ENCODE measurements at regions of chr21 and their contacts with region 1.

Region 1: DNA sequence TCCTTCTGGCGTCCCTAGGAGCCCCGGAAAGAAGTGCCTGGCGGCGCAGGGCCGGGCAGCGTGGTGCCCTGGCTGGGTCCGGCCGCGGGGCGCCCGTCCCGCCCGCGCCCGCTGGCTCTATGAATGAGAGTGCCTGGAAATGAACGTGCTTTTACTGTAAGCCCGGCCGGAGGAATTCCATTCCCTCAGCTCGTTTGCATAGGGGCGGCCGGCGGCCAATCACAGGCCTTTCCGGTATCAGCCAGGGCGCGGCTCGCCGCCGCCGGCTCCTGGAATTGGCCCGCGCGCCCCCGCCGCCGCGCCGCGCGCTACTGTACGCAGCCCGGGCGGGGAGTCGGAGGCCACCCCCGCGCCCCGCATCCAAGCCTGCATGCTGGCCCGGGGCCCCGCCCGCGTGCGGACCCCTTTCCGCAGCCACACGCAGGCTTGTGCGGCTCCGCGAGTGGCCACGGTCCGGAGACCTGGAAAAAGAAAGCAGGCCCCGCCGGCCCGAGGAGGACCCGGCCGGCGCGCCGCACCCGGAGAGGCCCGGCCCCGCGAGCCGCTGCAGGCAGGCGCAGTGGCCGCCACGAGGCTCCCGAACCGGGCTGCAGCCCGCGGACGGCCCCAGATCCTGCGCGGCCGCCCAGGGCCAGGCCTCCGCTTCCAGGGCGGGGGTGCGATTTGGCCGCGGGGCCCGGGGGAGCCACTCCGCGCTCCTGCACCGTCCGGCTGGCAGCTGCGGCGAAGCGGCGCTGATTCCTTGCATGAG is 160.4 kb downstream of the RUNX1 start:
- DNase-seq: peak; percentile 86 to 96
- H3K4me3 ChIP-seq: peak overlapping the region; percentile 77 to 85
- H3K27ac ChIP-seq: peak overlapping the region; percentile 86 to 94
- H3K4me1 ChIP-seq: peaks cover 4 to 24% of the 10 kb centered on the region in 2 donors
- H3K27me3 ChIP-seq: peaks cover 4% of the 10 kb centered on the region
- CTCF ChIP-seq: peak in 1 of 3 experiments; percentile 3

Region 2: DNA sequence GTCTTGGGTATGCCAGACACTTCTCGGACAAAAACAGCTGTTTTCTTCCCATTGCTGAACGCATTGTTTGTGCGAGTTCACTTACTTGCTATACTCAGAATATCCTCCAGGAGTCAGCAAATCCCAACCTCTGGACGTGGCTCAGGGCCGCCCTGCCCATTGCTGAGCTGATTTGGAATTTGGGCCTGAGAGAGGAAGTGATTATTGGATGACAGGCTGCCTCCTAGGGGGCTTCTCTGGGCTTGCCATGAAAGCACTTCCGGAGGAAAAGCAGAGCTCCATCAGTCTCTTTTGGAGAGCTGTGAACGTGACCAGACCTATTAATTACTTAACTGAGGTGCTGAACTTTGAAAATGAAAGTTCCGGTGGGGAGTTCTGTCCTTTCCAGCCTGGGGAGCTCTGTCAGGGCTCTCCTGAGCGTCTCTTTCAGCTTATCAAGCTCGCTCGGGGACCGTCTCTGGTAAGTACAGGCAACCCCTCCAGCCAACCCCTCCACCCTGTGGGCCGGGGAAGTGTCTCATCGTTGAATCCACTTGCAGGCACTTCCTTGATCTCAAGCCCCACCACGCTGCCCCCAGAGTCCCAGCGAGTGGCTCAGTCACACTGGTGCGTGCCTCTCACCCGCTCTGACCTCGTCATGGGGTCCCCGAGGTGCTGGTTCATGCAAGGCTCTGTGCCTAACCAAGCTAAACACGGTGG is 143.0 kb before region 1 on chr21:
- intact Hi-C with region 1: loop called (anchors 5 kb)
- DNase-seq: peak in 1 of 2 donors; percentile 83
- H3K4me3 ChIP-seq: no peak overlapping the region
- H3K27ac ChIP-seq: no peak overlapping the region
- H3K4me1 ChIP-seq: no peaks in the 10 kb centered on the region
- H3K27me3 ChIP-seq: no peaks in the 10 kb centered on the region
- CTCF ChIP-seq: peak; percentile 77 to 88 (median 85)

Region 3: GRCh38 chr21:34908419-34909055 is 19.8 kb after region 1 on chr21:
- intact Hi-C with region 1: no loop called
- DNase-seq: no peak
- H3K4me3 ChIP-seq: no peak overlapping the region
- H3K27ac ChIP-seq: no peak overlapping the region
- H3K4me1 ChIP-seq: no peaks in the 10 kb centered on the region
- H3K27me3 ChIP-seq: no peaks in the 10 kb centered on the region
- CTCF ChIP-seq: no peak

Region 4: DNA sequence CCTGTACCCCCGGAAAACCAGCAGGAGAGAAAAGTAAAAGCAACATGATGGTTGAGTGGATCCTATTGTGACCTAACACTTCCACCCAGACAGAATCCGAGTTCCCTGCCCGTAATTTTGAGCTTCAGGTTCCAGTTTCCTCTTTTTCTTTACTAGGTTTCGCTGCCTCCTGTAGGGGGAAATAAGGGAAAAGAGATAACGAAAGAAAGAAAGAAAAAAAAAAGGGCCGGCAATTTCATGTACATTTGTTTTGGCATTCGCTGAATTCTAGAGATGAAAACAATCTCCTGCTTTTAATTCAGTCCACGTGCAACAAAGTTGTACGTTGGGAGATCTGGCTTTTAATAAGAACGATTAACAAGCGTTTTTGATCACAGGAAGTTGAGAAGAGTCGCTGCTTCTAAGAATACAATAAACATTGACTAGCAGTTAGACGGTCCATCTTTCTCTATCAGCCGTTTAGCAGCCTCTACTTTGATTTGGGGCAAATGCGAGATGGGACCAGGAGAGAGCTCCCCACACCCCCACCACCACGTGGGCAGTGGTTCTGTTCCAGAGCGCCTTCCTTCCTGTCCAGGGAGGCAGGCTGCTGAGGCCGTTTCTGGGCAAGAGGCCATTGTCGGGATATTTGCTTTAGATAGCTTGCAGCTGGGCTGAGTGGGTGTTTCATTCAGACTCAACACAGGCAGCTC is 316.3 kb after region 1 on chr21:
- intact Hi-C with region 1: loop called (anchors 5 kb)
- DNase-seq: peak in 1 of 2 donors; percentile 82
- H3K4me3 ChIP-seq: peak overlapping the region; percentile 4 to 50
- H3K27ac ChIP-seq: peak overlapping the region; percentile 70 to 72
- H3K4me1 ChIP-seq: peaks cover 4 to 30% of the 10 kb centered on the region in 2 donors
- H3K27me3 ChIP-seq: no peaks in the 10 kb centered on the region
- CTCF ChIP-seq: no peak

Region 5: DNA sequence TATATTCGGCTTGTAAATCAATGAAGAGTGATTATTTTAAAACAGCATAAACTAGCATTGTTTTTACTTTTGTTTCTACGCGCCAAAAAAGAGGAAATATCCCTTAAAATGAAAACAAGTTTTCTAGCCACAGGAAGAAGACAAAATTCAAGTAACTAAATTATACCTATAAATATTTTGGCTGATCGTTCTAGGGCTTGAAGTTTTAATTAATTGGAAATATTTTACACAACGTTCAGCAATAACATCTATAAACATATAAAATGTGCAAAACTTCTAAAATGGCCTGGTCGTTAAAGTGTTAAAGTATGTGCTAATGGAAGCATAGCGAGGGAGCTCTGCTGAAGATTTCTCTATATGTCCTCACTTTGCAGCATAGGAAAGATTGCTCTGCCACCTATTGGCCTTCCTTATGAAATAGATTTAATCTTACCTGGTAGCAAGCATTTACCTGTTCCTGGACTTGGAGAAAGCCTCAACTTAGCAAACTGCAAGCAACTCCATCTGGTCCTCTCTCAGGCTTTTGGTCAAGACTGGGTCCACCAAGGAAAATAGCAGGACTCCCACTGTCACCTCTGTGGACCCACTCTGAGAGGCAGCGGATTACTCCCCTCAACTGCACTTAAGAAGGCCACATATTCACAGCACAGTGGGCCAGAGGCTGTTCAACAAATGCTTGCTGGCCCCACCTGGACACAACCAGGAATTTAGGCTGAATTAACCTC is 511.7 kb after region 1 on chr21:
- intact Hi-C with region 1: loop called (anchors 1 kb)
- DNase-seq: no peak
- H3K4me3 ChIP-seq: no peak overlapping the region
- H3K27ac ChIP-seq: no peak overlapping the region
- H3K4me1 ChIP-seq: no peaks in the 10 kb centered on the region
- H3K27me3 ChIP-seq: no peaks in the 10 kb centered on the region
- CTCF ChIP-seq: peak in 2 of 3 experiments; percentile 37 to 48

Region 6: DNA sequence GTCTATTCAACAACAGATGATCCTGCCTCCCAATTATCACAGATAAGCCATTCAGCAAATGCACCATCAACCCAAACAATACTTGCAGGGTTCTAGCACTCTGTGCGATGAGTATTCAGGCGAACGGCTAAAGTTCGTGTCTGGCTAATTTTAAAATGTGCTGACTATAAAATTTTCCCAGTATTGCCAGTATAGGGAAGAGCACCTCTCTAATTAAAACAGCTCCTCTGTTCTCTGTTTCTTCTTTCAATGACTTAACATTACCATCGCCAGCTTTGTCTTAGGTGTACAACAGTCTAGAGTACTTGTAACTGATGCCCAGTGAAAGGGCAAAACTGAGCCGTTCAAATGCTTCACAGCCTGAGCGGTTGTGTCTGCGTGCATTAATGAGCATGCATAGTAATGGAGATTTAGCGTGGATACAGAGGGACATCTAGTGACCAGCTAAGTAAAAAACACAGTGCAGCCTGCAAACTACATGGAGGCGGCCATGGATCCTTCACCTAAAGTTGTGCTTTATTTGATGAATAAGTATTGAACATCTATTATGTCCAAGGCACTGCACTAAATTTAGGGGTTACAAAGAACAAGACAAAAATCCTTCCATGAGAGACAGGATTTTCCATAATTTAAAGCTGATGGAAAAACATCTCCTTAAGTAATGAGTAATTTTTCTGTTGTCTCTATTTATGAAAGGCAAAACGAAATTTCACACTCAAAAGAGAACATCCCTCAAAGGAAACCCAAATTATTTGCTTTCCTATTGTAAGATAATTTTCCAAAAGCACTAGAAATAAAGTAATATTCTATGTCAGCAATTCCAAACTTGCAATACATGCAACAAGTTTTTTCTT is 1051.6 kb after region 1 on chr21:
- intact Hi-C with region 1: loop called (anchors 2 kb)
- DNase-seq: peak in 1 of 2 donors; percentile 72
- H3K4me3 ChIP-seq: no peak overlapping the region
- H3K27ac ChIP-seq: no peak overlapping the region
- H3K4me1 ChIP-seq: no peaks in the 10 kb centered on the region
- H3K27me3 ChIP-seq: no peaks in the 10 kb centered on the region
- CTCF ChIP-seq: peak; percentile 50 to 73 (median 63)

Region 7: DNA sequence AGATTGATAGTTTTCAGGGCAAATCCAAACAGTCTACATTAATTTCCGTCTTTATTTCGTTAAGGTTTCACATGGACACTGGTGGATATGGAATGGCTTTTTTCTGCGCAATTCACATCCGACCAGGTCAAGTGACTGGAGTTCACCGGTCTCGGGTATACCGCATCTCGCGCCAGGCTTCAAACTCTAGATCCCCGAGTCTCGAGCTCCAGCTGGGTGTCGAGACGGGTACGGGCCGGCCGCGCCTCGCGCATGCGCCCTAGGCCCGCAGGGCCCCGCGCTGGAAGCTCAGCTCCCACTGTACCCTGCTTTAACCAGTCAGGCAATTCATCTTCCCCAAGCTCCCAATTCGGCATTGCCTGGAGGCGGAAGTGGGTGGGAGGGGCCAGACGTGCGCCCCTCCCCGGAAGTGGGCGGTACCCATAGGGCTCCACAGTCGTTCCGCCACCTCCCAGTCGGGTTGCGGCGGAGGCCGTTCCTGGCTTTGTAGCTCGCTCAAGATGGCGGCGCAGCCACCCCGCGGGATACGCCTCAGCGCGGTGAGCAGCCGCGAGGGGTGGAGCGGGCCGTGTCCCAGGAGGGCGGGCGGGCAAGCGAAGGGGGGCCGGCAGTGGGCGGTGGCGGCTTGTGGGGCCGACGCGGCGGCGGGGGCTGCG is 1431.1 kb after region 1 on chr21 and contains the start of gene MORC3:
- intact Hi-C with region 1: loop called (anchors 5 kb)
- DNase-seq: peak; percentile 94 to 99
- H3K4me3 ChIP-seq: peak within 1 kb of the TSS; percentile 87 to 91
- H3K27ac ChIP-seq: peak within 1 kb of the TSS; percentile 97
- H3K4me1 ChIP-seq: peaks cover 0 to 21% of the 10 kb centered on the region in 2 donors
- H3K27me3 ChIP-seq: no peaks in the 10 kb centered on the region
- CTCF ChIP-seq: no peak
- total RNA-seq, gene MORC3: 7.9 TPM